ENCODE measurements at regions of chr6 and their contacts with region 1.

Region 1: DNA sequence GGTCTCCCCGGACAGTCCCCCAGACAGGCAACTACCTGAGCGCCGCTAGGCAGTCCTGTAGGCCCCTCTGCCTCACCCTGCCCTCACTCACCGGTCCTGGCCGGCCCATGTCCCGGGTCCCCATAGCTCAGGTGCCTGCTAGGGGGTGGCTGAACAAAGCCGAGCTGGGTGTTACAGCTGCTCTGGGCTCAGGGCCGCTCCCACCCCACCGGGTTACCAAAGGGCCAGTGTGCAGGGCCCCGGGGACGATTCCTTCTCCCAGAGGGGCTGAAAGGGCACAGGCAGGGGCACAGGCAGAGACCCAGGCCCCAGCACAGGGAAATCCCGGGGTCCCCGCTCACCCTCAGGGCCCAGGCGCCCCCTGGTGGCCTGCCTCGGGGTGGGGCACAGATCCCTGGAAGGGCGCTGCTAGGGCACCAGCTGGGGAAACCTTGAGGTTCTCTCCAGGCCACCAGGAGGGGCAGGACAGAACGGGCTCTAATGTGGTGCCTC is 118.4 kb downstream of the GRM4 start:
- DNase-seq: peak; percentile 72
- H3K4me3 ChIP-seq: no peak overlapping the region
- H3K27ac ChIP-seq: no peak overlapping the region
- H3K4me1 ChIP-seq: no peaks in the 10 kb centered on the region
- H3K27me3 ChIP-seq: no peaks in the 10 kb centered on the region
- CTCF ChIP-seq: peak; percentile 88

Region 2: GRCh38 chr6:33654831-33655554 is 372.5 kb before region 1 on chr6:
- intact Hi-C with region 1: no loop called
- DNase-seq: no peak
- H3K4me3 ChIP-seq: no peak overlapping the region
- H3K27ac ChIP-seq: no peak overlapping the region
- H3K4me1 ChIP-seq: no peaks in the 10 kb centered on the region
- H3K27me3 ChIP-seq: no peaks in the 10 kb centered on the region
- CTCF ChIP-seq: no peak

Region 3: DNA sequence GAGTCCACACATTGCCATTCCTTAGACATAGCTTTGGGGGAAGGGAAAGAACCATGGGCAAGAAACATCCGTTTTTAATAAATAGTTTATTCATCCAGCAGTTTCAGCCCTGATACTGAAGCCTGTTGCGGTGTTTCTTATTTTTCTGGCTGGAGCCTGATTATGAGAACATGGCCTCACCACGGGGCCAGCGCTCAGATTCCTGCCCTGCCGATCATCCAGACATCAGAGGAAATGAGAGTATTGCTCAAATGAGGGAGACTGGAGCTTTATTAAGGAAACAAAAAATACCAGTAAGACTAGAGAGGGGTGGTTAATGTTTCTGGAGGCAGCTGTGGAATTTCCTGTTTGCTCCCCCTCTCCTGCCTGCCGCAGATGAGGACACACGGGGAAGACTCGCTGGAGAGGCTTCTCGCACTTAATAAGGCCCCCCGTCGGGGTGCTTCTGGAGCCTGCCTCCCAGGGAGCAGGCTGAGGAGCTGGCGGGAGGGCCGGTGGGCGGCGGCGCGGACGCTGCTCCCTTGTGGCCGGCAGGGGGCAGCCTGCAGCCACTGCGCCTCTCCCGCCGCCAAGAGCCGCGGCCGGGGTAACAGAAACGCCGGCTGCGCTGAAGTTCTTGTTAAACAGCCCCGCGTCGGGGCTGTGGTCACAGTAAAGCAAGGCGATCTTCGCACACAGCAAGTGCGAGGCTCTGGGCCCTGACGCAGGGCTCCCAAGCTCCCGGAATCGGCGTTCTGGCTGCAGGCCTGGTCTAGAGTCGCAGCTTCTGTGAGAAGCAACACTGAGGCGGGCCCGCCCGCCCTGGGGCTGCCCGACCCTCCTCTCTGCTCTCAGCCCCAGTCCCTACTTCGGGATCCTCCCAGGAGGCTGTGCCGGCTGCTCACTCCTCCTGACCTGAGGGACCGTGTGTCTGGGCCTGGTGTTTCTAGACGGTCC is 256.1 kb before region 1 on chr6:
- intact Hi-C with region 1: loop called (anchors 2 kb)
- DNase-seq: peak; percentile 56
- H3K4me3 ChIP-seq: no peak overlapping the region
- H3K27ac ChIP-seq: peak overlapping the region; percentile 19
- H3K4me1 ChIP-seq: peaks cover 4% of the 10 kb centered on the region
- H3K27me3 ChIP-seq: no peaks in the 10 kb centered on the region
- CTCF ChIP-seq: peak; percentile 98

Region 4: DNA sequence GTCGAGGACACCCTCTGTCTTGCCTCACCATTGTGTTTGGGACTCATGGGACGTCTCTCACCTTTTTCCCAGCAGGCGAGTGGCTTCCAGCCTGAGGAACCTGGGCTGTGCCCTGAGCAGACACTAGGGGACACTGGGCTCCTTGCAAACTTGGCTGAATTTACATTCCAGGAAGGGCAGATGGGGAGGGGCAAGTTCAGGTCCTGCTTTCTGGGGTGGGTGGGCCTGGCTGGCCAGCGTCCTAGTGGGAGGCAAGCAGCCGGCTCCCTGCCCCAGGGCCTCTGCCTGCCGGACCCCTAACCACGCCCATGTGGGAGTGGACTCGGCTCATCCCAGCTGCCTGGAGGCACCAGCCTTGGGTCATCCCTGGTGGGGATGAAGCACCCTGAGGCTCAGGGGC is 175.5 kb before region 1 on chr6:
- intact Hi-C with region 1: loop called (anchors 5 kb)
- DNase-seq: peak; percentile 27
- H3K4me3 ChIP-seq: no peak overlapping the region
- H3K27ac ChIP-seq: no peak overlapping the region
- H3K4me1 ChIP-seq: no peaks in the 10 kb centered on the region
- H3K27me3 ChIP-seq: no peaks in the 10 kb centered on the region
- CTCF ChIP-seq: peak; percentile 27

Region 5: GRCh38 chr6:33886673-33887144 is 140.8 kb before region 1 on chr6:
- intact Hi-C with region 1: no loop called
- DNase-seq: peak; percentile 50
- H3K4me3 ChIP-seq: no peak overlapping the region
- H3K27ac ChIP-seq: peak overlapping the region; percentile 82
- H3K4me1 ChIP-seq: peaks cover 4% of the 10 kb centered on the region
- H3K27me3 ChIP-seq: no peaks in the 10 kb centered on the region
- CTCF ChIP-seq: no peak

Region 6: GRCh38 chr6:33967966-33968724 is 59.3 kb before region 1 on chr6:
- intact Hi-C with region 1: loop called (anchors 5 kb)
- DNase-seq: peak; percentile 57
- H3K4me3 ChIP-seq: no peak overlapping the region
- H3K27ac ChIP-seq: no peak overlapping the region
- H3K4me1 ChIP-seq: no peaks in the 10 kb centered on the region
- H3K27me3 ChIP-seq: no peaks in the 10 kb centered on the region
- CTCF ChIP-seq: peak; percentile 29

Region 7: GRCh38 chr6:34145161-34146020 is 117.9 kb after region 1 on chr6:
- intact Hi-C with region 1: no loop called
- DNase-seq: no peak
- H3K4me3 ChIP-seq: peak overlapping the region; percentile 23
- H3K27ac ChIP-seq: no peak overlapping the region
- H3K4me1 ChIP-seq: peaks cover 14% of the 10 kb centered on the region
- H3K27me3 ChIP-seq: peaks cover 58% of the 10 kb centered on the region
- CTCF ChIP-seq: no peak

Measured in colonic mucosa (tissue), 4 donors.